GM10248 (cell line): ENCODE measurements at regions of chr13 and their contacts with region 1.

Region 1: DNA sequence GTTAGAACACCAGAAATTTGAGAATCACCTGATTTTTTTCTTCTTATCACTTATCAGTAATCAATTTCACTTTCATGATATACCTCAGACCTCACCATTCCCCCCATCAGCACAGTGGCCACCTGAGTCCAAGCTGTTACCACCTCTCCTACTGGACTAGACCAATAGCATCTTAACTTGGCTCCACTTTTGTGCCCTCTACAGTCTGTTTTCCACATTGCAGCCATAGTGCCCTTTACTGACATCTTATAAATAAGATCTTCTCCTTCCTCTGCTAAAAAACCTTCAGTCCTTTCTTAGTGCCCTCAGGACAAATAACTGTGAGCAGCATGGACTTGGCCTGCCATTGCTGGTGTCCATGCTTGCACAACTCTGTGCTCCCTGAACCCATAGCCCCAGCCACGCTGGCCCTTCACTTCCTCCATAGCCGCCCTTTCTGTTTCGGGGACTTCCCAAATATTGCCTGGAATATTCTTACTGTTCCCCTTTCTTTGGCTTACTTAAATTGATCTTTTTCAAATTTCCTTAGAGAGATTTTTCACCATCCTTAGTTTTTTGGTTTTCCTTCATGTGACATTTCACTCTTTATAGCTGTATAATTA is 380.8 kb downstream of the LMO7 start:
- DNase-seq: peak; percentile 21
- CTCF ChIP-seq: peak; percentile 75

Region 2: GRCh38 chr13:75299913-75300862 is 716.7 kb before region 1 on chr13:
- CTCF ChIA-PET with region 1: no interaction called
- POLR2A ChIA-PET with region 1: no interaction called
- DNase-seq: no peak
- CTCF ChIP-seq: no peak

Region 3: GRCh38 chr13:76004416-76004815 is 12.5 kb before region 1 on chr13:
- CTCF ChIA-PET with region 1: interaction called, 10 read pairs
- POLR2A ChIA-PET with region 1: no interaction called
- DNase-seq: no peak
- CTCF ChIP-seq: no peak